ENCODE measurements at regions of chr2 and their contacts with region 1.

Region 1: DNA sequence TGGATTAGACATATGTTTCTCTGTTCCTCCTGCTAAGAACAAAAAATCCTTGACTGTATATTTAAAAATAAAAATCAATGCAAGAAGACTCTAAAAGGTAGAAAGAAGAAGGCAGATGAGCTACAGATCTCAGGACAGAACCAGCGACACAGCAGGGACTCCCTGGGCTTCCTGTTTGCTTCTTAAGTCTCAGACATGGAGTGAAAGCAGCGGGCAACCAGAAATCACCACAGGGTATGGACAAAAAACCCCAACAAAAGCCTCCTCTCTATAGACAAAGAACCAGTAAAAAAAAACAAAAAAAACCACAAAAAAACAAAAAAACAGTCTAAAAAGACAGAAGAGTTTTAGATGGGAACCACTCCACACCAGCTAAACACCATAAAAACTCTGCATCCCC is 971.0 kb upstream of the GYPC start:
- DNase-seq: no peak
- ATAC-seq: no peak
- H3K4me3 ChIP-seq: no peak overlapping the region
- H3K4me3 Mint-ChIP-seq: no peak overlapping the region
- H3K27ac ChIP-seq: no peak overlapping the region
- H3K27ac Mint-ChIP-seq: no peak overlapping the region
- H3K4me1 ChIP-seq: no peaks in the 10 kb centered on the region
- H3K4me1 Mint-ChIP-seq: no peaks in the 10 kb centered on the region
- H3K27me3 ChIP-seq: no peaks in the 10 kb centered on the region
- H3K27me3 Mint-ChIP-seq: peaks cover 0 to 3% (median 0%) of the 10 kb centered on the region in 5 donors

Region 2: DNA sequence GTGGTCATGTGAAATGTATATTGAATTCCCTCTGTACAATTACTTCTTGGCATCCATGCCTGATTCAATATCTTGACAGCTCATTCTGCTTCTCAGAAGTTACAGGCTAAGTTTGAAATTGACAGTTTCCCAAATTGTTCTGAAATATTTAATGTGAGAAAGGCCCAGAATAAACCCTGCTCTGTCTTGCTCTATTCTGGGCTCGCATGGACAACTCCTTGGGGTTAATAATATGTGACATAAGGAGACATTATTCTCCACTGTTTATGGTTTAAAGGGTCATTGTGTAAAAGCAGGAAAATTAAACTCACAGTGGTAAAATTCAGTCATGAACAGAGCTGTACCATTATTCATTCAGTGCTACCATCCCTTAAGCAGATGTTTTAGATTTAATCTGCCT is 1820.5 kb before region 1 on chr2:
- CTCF ChIA-PET with region 1: no interaction called
- POLR2A ChIA-PET with region 1: no interaction called
- intact Hi-C with region 1: no loop called
- DNase-seq: no peak
- ATAC-seq: no peak
- H3K4me3 ChIP-seq: no peak overlapping the region
- H3K4me3 Mint-ChIP-seq: no peak overlapping the region
- H3K27ac ChIP-seq: no peak overlapping the region
- H3K27ac Mint-ChIP-seq: no peak overlapping the region
- H3K4me1 ChIP-seq: no peaks in the 10 kb centered on the region
- H3K4me1 Mint-ChIP-seq: no peaks in the 10 kb centered on the region
- H3K27me3 ChIP-seq: no peaks in the 10 kb centered on the region
- H3K27me3 Mint-ChIP-seq: no peaks in the 10 kb centered on the region

Region 3: GRCh38 chr2:125450099-125450498 is 234.8 kb before region 1 on chr2:
- CTCF ChIA-PET with region 1: no interaction called
- POLR2A ChIA-PET with region 1: no interaction called
- intact Hi-C with region 1: no loop called
- DNase-seq: no peak
- ATAC-seq: no peak
- H3K4me3 ChIP-seq: no peak overlapping the region
- H3K4me3 Mint-ChIP-seq: no peak overlapping the region
- H3K27ac ChIP-seq: no peak overlapping the region
- H3K27ac Mint-ChIP-seq: no peak overlapping the region
- H3K4me1 ChIP-seq: no peaks in the 10 kb centered on the region
- H3K4me1 Mint-ChIP-seq: no peaks in the 10 kb centered on the region
- H3K27me3 ChIP-seq: no peaks in the 10 kb centered on the region
- H3K27me3 Mint-ChIP-seq: no peaks in the 10 kb centered on the region

Region 4: DNA sequence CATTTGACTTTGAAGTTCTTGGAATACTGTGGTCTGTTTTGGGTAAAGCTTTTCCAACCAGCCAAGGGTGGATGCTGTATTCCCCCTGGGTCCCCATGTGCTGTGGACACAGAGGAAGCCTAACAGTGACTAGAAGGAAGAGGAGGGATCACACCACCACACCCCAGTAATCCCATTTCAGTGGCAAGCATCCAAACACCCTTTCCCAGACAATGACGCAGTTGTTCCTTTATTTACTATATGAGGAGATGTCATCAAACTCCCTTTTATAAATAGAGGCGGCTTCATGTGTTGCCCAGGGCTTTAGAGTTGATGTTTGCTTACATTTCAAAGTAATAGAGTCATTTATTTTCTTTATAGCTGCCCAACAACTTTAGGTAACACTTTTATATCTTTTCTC is 11.6 kb after region 1 on chr2:
- CTCF ChIA-PET with region 1: interaction called, 3 read pairs
- POLR2A ChIA-PET with region 1: no interaction called
- intact Hi-C with region 1: loop called (anchors 1 kb)
- DNase-seq: no peak
- ATAC-seq: no peak
- H3K4me3 ChIP-seq: no peak overlapping the region
- H3K4me3 Mint-ChIP-seq: no peak overlapping the region
- H3K27ac ChIP-seq: no peak overlapping the region
- H3K27ac Mint-ChIP-seq: no peak overlapping the region
- H3K4me1 ChIP-seq: no peaks in the 10 kb centered on the region
- H3K4me1 Mint-ChIP-seq: no peaks in the 10 kb centered on the region
- H3K27me3 ChIP-seq: no peaks in the 10 kb centered on the region
- H3K27me3 Mint-ChIP-seq: no peaks in the 10 kb centered on the region